ENCODE measurements at regions of chr6 and their contacts with region 1.

Region 1: DNA sequence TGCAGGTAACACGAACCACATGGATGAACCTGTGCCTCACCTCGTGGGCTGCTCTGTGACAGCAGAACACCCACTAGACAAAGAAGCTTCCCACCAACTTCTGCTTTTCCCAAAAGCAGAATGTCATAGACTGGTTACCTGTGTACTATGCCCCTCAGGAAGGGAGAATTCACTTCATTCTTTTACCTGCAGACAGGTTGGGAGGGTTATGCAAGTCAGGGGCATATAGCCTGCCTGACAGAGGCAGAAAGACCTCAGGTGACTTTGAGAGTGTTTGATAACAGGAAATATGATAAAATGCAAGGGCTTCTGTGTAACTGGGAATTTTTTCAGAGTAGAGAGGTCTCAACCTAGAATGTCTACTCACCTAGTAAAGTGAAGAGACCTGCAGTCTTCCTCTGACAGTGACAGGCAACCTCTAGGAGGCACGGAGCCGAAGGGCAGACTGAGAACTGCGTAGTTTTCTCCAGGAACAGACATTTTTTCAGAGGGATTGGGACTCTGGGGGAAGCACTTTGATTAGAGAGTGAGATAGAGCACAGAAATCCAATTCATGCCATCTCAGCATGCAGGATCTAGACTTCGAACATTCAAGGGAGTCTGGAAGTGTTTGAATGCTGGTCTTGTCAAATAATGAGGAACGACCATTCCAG is 213.2 kb downstream of the AKAP7 start:
- DNase-seq: no peak
- H3K4me3 ChIP-seq: no peak overlapping the region
- H3K27ac ChIP-seq: no peak overlapping the region
- H3K4me1 ChIP-seq: no peaks in the 10 kb centered on the region
- H3K27me3 ChIP-seq: no peaks in the 10 kb centered on the region
- CTCF ChIP-seq: no peak

Region 2: DNA sequence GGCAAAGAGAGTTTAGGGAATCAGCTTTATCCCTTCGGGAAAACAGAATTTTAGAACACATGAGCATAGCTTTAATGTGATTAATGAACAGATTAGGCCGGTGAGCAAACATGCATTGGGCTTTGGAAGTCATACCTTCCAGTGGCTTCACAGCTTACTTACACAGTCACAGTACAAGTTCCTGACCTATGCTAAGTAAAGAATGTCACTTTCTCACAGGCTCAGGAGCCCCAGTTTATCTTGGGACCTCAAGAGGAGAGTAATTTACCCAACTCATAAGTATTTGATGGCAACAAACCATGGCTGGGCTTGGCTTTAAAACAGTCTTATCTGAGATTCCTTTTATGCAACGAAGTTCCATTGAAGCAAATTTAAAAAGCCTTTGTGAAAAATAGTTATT is 17.3 kb before region 1 on chr6:
- CTCF ChIA-PET with region 1: no interaction called
- POLR2A ChIA-PET with region 1: interaction called, 14 read pairs
- intact Hi-C with region 1: no loop called
- DNase-seq: no peak
- H3K4me3 ChIP-seq: no peak overlapping the region
- H3K27ac ChIP-seq: no peak overlapping the region
- H3K4me1 ChIP-seq: no peaks in the 10 kb centered on the region
- H3K27me3 ChIP-seq: no peaks in the 10 kb centered on the region
- CTCF ChIP-seq: no peak